ENCODE measurements at regions of chr1 and their contacts with region 1.

Region 1: GRCh38 chr1:174217787-174218574 is 58.7 kb downstream of the RABGAP1L start:
- DNase-seq: peak; percentile 21
- ATAC-seq: peak; percentile 76; the same call in 1 of the 2 replicates
- H3K4me3 ChIP-seq: no peak overlapping the region
- H3K27ac ChIP-seq: no peak overlapping the region
- H3K4me1 ChIP-seq: peaks cover 0 to 6% of the 10 kb centered on the region in 2 experiments; a peak in 1 of 4 replicates
- H3K27me3 ChIP-seq: no peaks in the 10 kb centered on the region
- CTCF ChIP-seq: peak; percentile 58 to 85 (median 66); a peak in 5 of 6 replicates
- POLR2A ChIP-seq: no peak
- RAD21 ChIP-seq: peak; percentile 83

Region 2: GRCh38 chr1:173043253-173043652 is 1174.7 kb before region 1 on chr1:
- CTCF ChIA-PET with region 1: no interaction called
- POLR2A ChIA-PET with region 1: no interaction called
- RAD21 ChIA-PET with region 1: no interaction called
- intact Hi-C with region 1: no loop called
- DNase-seq: no peak
- ATAC-seq: peak; percentile 75
- H3K4me3 ChIP-seq: peak overlapping the region in 1 of 2 experiments; percentile 15; a peak in 2 of 4 replicates
- H3K27ac ChIP-seq: peak overlapping the region; percentile 51; the same call in 1 of the 2 replicates
- H3K4me1 ChIP-seq: peaks cover 27 to 46% of the 10 kb centered on the region in 2 experiments
- H3K27me3 ChIP-seq: no peaks in the 10 kb centered on the region
- CTCF ChIP-seq: no peak
- POLR2A ChIP-seq: no peak
- RAD21 ChIP-seq: no peak

Region 3: GRCh38 chr1:173420330-173420806 is 797.6 kb before region 1 on chr1:
- CTCF ChIA-PET with region 1: no interaction called
- POLR2A ChIA-PET with region 1: no interaction called
- RAD21 ChIA-PET with region 1: no interaction called
- intact Hi-C with region 1: loop called (anchors 2 kb)
- DNase-seq: peak; percentile 76
- ATAC-seq: peak; percentile 89
- H3K4me3 ChIP-seq: no peak overlapping the region
- H3K27ac ChIP-seq: no peak overlapping the region
- H3K4me1 ChIP-seq: peaks cover 2 to 27% of the 10 kb centered on the region in 2 experiments; a peak in 3 of 4 replicates
- H3K27me3 ChIP-seq: no peaks in the 10 kb centered on the region
- CTCF ChIP-seq: peak; percentile 61 to 91 (median 80)
- POLR2A ChIP-seq: no peak
- RAD21 ChIP-seq: peak; percentile 96

Region 4: GRCh38 chr1:173867753-173868265 is 350.2 kb before region 1 on chr1 and contains the start of gene GAS5:
- CTCF ChIA-PET with region 1: no interaction called
- POLR2A ChIA-PET with region 1: no interaction called
- RAD21 ChIA-PET with region 1: no interaction called
- intact Hi-C with region 1: loop called (anchors 10 kb)
- DNase-seq: peak; percentile 99
- ATAC-seq: peak; percentile 85
- H3K4me3 ChIP-seq: peak within 1 kb of the TSS; percentile 69 to 94
- H3K27ac ChIP-seq: peak within 1 kb of the TSS; percentile 91
- H3K4me1 ChIP-seq: peaks cover 11 to 40% of the 10 kb centered on the region in 2 experiments; a peak in 3 of 4 replicates
- H3K27me3 ChIP-seq: no peaks in the 10 kb centered on the region
- CTCF ChIP-seq: no peak
- POLR2A ChIP-seq: peak; percentile 100
- RAD21 ChIP-seq: no peak
- total RNA-seq, gene GAS5: 798 TPM

Region 5: DNA sequence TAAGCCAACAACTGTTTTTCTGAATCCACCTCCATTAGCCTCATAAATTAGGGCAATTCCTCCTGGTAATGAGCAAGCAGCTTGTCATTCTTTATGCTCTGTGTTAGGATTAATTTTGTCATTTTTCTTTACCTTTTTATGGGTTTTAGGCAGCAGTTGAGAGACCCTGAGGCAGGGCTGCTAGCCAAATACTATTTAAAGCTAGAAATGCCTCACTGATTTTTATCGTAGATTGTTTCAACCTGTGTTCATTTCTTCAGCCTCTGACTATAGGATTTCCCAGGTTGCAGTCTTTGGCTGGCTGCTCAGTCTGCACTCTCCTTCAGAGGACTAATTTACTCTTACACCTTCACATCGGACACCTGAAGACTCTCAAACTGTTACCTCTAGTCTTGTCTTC is 120.6 kb before region 1 on chr1:
- CTCF ChIA-PET with region 1: interaction called, 5 read pairs
- POLR2A ChIA-PET with region 1: no interaction called
- RAD21 ChIA-PET with region 1: no interaction called
- intact Hi-C with region 1: loop called (anchors 5 kb)
- DNase-seq: no peak
- ATAC-seq: no peak
- H3K4me3 ChIP-seq: no peak overlapping the region
- H3K27ac ChIP-seq: no peak overlapping the region
- H3K4me1 ChIP-seq: no peaks in the 10 kb centered on the region
- H3K27me3 ChIP-seq: no peaks in the 10 kb centered on the region
- CTCF ChIP-seq: no peak
- POLR2A ChIP-seq: no peak
- RAD21 ChIP-seq: no peak

Region 6: GRCh38 chr1:174153085-174153825 is 64.7 kb before region 1 on chr1:
- CTCF ChIA-PET with region 1: no interaction called
- POLR2A ChIA-PET with region 1: no interaction called
- RAD21 ChIA-PET with region 1: no interaction called
- intact Hi-C with region 1: no loop called
- DNase-seq: no peak
- ATAC-seq: 0 out of 2 replicates have a peak, but pooled peaks have one; percentile 40
- H3K4me3 ChIP-seq: no peak overlapping the region
- H3K27ac ChIP-seq: no peak overlapping the region
- H3K4me1 ChIP-seq: peaks cover 8 to 15% of the 10 kb centered on the region in 2 experiments
- H3K27me3 ChIP-seq: no peaks in the 10 kb centered on the region
- CTCF ChIP-seq: no peak
- POLR2A ChIP-seq: no peak
- RAD21 ChIP-seq: no peak

Region 7: DNA sequence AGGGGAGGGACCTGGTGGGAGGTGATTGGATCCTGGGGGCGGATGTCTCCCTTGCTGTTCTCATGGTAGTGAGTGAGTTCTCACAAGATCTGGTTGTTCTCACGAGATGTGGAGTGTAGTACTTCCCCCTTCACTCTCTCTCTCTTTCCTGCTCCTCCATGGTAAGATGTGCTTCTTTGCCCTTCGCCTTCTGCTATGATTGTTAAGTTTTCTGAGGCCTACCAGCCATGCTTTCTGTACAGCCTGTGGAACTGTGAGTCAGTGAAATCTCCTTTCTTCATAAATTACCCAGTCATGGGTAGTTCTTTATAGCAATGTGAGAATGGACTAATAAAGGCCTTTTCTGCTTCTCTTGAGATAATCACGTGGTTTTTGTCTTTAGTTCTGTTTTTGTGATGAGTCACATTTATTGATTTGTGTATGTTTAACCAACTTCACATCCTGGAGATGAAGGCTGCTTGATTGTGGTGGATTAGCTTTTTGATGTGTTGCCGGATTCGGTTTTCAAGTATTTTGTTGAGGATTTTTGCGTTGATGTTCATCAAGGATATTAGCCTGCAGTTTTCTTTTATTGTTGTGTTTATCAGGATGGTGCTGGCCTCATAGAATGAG is 13.2 kb before region 1 on chr1:
- CTCF ChIA-PET with region 1: interaction called, 12 read pairs
- POLR2A ChIA-PET with region 1: no interaction called
- RAD21 ChIA-PET with region 1: no interaction called
- intact Hi-C with region 1: no loop called
- DNase-seq: peak; percentile 63
- ATAC-seq: peak; percentile 86
- H3K4me3 ChIP-seq: peak overlapping the region; percentile 6 to 25
- H3K27ac ChIP-seq: peak overlapping the region; percentile 59
- H3K4me1 ChIP-seq: peaks cover 19 to 21% of the 10 kb centered on the region in 2 experiments
- H3K27me3 ChIP-seq: no peaks in the 10 kb centered on the region
- CTCF ChIP-seq: no peak
- POLR2A ChIP-seq: no peak
- RAD21 ChIP-seq: no peak

Region 8: GRCh38 chr1:174266991-174267612 is 49.1 kb after region 1 on chr1:
- CTCF ChIA-PET with region 1: no interaction called
- POLR2A ChIA-PET with region 1: no interaction called
- RAD21 ChIA-PET with region 1: no interaction called
- intact Hi-C with region 1: no loop called
- DNase-seq: no peak
- ATAC-seq: no peak
- H3K4me3 ChIP-seq: no peak overlapping the region
- H3K27ac ChIP-seq: no peak overlapping the region
- H3K4me1 ChIP-seq: no peaks in the 10 kb centered on the region
- H3K27me3 ChIP-seq: no peaks in the 10 kb centered on the region
- CTCF ChIP-seq: no peak
- POLR2A ChIP-seq: no peak
- RAD21 ChIP-seq: no peak

Region 9: GRCh38 chr1:174344162-174344561 is 126.2 kb after region 1 on chr1:
- CTCF ChIA-PET with region 1: no interaction called
- POLR2A ChIA-PET with region 1: no interaction called
- RAD21 ChIA-PET with region 1: no interaction called
- intact Hi-C with region 1: no loop called
- DNase-seq: no peak
- ATAC-seq: no peak
- H3K4me3 ChIP-seq: no peak overlapping the region
- H3K27ac ChIP-seq: no peak overlapping the region
- H3K4me1 ChIP-seq: no peaks in the 10 kb centered on the region
- H3K27me3 ChIP-seq: no peaks in the 10 kb centered on the region
- CTCF ChIP-seq: no peak
- POLR2A ChIP-seq: no peak
- RAD21 ChIP-seq: no peak

Measured in HCT116 (cell line).